Ascending aorta (tissue), 2 donors: ENCODE measurements at regions of chr20 and their contacts with region 1.

Region 1: DNA sequence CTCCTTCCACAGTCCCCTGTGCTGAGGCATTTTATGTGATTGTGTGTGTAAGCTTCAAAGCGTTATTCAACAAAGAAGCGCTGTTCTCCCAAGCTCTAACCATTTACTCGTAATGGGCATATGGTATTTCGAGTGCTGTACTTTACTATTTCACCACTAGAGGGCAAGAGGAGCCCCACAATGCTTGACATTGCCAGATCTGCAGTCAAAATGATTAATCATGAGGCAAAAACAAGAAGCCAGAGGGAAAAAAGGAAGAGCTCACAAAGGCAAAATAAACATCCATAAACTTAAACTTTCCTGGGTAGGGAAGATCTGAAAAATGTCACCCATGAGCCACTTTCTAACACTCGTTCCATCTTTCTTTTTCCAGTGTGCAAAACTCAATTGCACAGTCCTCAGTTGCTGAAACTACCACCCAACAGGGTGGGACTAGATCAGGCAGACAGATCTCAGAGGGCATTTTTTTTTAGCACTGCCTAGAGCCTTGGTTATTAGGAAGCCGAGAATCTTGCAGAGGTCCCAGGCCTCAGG is 215.0 kb upstream of the PLCB4 start:
- DNase-seq: peak in 1 of 2 donors; percentile 66
- H3K4me3 ChIP-seq: peak overlapping the region in 1 of 2 donors; percentile 44
- H3K27ac ChIP-seq: peak overlapping the region; percentile 50 to 70
- H3K4me1 ChIP-seq: peaks cover 0 to 13% of the 10 kb centered on the region in 2 donors
- H3K27me3 ChIP-seq: no peaks in the 10 kb centered on the region
- CTCF ChIP-seq: peak; percentile 74 to 87 (median 86)

Region 2: DNA sequence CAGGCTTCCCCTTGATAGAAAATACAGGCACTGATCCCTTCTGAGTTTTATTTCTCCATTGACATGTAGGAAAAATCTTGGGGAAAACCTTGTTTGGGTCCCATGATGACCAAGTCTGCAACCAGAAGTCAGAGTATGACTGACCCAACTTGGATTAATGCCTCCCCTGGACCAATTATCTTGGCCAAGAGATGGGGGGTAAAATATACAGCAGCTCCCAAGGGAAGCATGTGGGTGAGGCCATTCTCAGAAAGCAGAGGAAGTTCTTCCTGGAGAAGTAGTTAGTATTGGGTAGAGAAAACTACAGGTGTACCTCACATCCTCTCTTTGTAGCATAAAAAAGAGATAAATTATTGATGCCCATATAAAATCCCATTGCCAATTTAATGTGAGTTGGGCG is 70.1 kb before region 1 on chr20:
- intact Hi-C with region 1: loop called (anchors 2 kb)
- DNase-seq: no peak
- H3K4me3 ChIP-seq: no peak overlapping the region
- H3K27ac ChIP-seq: peak overlapping the region; percentile 58 to 65
- H3K4me1 ChIP-seq: peaks cover 0 to 12% of the 10 kb centered on the region in 2 donors
- H3K27me3 ChIP-seq: no peaks in the 10 kb centered on the region
- CTCF ChIP-seq: no peak

Region 3: GRCh38 chr20:8798505-8798904 is 55.4 kb before region 1 on chr20:
- intact Hi-C with region 1: no loop called
- DNase-seq: no peak
- H3K4me3 ChIP-seq: no peak overlapping the region
- H3K27ac ChIP-seq: no peak overlapping the region
- H3K4me1 ChIP-seq: no peaks in the 10 kb centered on the region
- H3K27me3 ChIP-seq: no peaks in the 10 kb centered on the region
- CTCF ChIP-seq: no peak

Region 4: GRCh38 chr20:8901237-8902025 is 47.6 kb after region 1 on chr20:
- intact Hi-C with region 1: loop called (anchors 2 kb)
- DNase-seq: peak; percentile 23 to 89
- H3K4me3 ChIP-seq: no peak overlapping the region
- H3K27ac ChIP-seq: peak overlapping the region; percentile 74 to 81
- H3K4me1 ChIP-seq: peaks cover 0 to 14% of the 10 kb centered on the region in 2 donors
- H3K27me3 ChIP-seq: no peaks in the 10 kb centered on the region
- CTCF ChIP-seq: no peak

Region 5: DNA sequence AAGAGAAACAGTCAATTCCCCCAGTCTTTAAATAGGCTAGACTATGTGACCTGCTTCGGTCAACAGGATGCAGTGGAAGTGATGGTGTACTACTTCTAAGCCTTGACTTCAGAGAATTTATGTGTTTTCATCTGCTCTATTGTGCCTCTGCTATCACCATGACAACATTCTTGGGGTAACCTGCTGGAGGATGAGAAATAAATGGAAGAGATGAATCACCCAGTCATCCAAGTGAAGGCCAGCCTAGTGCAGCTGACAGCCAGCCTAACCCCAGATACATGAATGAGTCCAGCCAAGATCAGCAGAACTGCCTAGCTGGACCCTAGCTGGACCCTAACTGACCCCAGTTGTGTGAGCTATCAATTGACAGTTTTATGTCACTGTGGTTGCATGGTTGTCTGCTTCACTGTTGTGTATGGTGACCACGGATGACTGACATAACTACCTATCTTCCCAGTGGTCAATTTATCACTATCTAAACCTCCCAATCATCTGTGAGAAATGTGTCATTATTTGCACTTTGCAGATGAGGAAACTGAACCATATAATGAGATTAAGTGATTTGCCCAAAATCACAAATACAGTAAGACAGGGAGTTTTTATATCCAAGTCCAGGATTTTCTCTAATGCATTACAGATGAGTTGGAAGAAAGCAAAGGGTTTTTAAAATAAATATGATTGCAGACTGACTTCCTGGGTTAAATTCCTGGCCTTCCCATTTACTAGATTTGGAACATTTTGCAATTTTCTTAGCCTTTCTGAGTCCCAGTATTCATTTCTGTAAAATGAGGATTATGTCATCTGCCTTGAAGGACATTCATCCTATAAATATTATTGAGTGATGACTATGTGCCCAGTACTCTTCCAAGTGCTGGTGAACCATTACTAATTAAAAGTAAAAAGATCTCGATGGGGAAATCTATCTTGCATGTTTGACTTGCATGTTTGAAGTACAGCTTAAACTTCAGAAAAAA is 78.6 kb after region 1 on chr20:
- intact Hi-C with region 1: loop called (anchors 2 kb)
- DNase-seq: no peak
- H3K4me3 ChIP-seq: no peak overlapping the region
- H3K27ac ChIP-seq: peak overlapping the region; percentile 32 to 59
- H3K4me1 ChIP-seq: peaks cover 0 to 11% of the 10 kb centered on the region in 2 donors
- H3K27me3 ChIP-seq: no peaks in the 10 kb centered on the region
- CTCF ChIP-seq: no peak

Region 6: GRCh38 chr20:9068851-9069663 is 215.2 kb after region 1 on chr20 and contains the start of gene PLCB4:
- intact Hi-C with region 1: loop called (anchors 5 kb)
- DNase-seq: peak in 1 of 2 donors; percentile 68
- H3K4me3 ChIP-seq: peak within 1 kb of the TSS; percentile 67 to 83
- H3K27ac ChIP-seq: peak within 1 kb of the TSS; percentile 85 to 86
- H3K4me1 ChIP-seq: peaks cover 0 to 2% of the 10 kb centered on the region in 2 donors
- H3K27me3 ChIP-seq: no peaks in the 10 kb centered on the region
- CTCF ChIP-seq: no peak
- total RNA-seq, gene PLCB4: 38.0 TPM

Region 7: GRCh38 chr20:9359561-9360308 is 505.9 kb after region 1 on chr20:
- intact Hi-C with region 1: loop called (anchors 2 kb)
- DNase-seq: no peak
- H3K4me3 ChIP-seq: no peak overlapping the region
- H3K27ac ChIP-seq: peak overlapping the region in 1 of 2 donors; percentile 30
- H3K4me1 ChIP-seq: peaks cover 0 to 17% of the 10 kb centered on the region in 2 donors
- H3K27me3 ChIP-seq: no peaks in the 10 kb centered on the region
- CTCF ChIP-seq: peak; percentile 32 to 58 (median 45)

Region 8: DNA sequence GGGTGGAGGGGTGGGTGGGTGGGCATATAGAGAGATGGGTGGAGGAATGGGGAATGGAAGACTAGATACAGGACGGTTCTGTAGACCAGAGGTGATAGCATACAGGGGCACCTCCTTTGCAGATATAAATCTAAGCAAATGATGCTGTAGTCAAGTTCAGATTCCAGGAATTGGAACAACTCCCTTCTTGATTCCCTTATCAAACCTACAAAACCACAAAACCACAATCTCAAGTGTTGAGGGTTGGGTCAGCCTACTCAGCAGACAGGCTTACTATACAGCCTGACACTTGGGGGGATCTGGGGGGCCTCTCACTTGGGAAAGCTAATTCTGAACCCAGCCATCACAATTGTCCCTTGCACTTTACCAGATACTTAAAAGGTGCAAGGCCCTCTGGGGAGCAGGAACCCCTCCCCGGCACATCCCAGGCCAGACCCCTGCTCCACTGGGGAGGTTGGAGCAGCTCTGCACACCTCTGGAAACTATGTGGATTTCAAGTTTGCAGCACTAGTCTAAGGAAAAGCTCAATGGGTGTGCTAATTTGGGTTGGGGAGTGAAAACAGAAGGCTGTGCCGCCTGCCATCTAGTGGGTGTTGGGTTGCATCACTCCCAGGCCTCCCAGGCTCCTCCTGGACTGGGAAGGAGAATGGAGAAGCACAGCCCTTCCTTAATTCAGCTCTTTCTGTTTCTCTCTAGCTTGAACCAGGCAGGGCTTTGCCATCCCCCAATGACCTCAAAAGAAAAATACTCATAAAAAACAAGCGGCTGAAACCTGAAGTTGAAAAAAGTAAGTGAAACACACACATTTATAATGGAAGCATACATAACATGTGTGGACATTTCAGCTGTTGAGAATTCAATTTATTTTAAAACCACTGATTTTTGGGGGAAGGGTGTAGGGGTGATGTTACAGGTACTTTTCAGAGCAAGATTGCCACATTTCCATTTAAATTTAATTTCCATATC is 539.3 kb after region 1 on chr20:
- intact Hi-C with region 1: loop called (anchors 2 kb)
- DNase-seq: peak; percentile 32 to 81
- H3K4me3 ChIP-seq: no peak overlapping the region
- H3K27ac ChIP-seq: no peak overlapping the region
- H3K4me1 ChIP-seq: peaks cover 0 to 16% of the 10 kb centered on the region in 2 donors
- H3K27me3 ChIP-seq: no peaks in the 10 kb centered on the region
- CTCF ChIP-seq: peak; percentile 53 to 80 (median 60)